ENCODE measurements at regions of chr6 and their contacts with region 1.

Region 1: GRCh38 chr6:26329763-26330511 is 35.1 kb upstream of the BTN3A2 start:
- DNase-seq: no peak

Region 2: DNA sequence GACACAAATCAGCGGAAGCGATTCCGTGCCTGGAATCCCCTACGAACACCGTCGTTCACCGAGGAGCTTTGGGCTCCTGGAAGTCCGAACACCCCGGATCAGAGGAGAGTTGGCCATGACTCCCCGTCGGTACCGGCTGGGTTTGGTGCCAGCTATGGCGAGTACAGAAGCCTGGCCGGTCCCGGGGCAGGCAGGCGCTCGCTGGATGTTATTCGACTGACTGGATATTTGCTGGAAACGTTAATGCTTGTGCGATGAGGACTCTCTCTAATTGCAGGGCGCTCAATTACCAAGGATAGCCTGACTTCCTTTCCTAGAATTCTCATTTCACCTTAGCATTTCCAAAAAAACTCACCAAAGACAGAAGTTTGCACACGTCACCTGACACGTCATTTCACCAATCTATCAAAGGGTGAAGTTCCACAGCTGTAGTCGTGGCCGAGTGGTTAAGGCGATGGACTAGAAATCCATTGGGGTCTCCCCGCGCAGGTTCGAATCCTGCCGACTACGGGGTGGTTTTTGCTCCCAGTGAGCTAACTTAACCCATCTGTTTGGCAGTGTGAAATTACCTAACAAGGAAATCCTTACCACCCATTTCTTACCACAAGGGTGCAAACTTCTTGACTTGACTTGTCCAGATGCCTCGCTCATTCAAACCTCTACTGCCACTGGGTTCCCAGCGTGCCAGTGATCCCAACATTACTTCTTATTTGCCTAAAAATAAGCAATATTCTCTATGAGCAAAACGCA is 1165.6 kb after region 1 on chr6:
- intact Hi-C with region 1: loop called in 1 of 2 experiments (anchors 10 kb)
- DNase-seq: no peak